Transverse colon (tissue), 4 donors: ENCODE measurements at regions of chr16 and their contacts with region 1.

Region 1: DNA sequence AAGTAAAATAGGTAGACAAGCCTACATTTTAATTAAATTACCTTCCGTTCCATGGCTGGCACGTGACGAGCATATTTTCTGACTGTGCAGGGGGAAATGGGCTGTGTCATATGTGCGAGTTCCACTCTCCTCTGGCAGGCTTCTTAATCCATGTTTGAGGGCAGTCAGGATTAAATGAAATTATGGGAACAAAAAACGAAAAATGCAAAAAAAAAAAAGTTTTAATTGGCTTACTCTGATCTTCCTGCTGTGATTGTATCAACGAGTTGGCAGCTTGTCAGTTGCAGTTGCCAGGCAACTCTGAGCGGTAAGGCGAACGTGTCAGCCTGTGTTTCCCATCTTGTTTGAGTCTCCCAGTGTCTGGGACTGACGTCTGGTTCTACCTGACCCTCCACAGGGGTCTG is 302.9 kb upstream of the XYLT1 start:
- DNase-seq: no peak
- H3K4me3 ChIP-seq: no peak overlapping the region
- H3K27ac ChIP-seq: no peak overlapping the region
- H3K4me1 ChIP-seq: no peaks in the 10 kb centered on the region
- H3K27me3 ChIP-seq: no peaks in the 10 kb centered on the region
- CTCF ChIP-seq: no peak
- EP300 ChIP-seq: no peak
- POLR2A ChIP-seq: no peak

Region 2: DNA sequence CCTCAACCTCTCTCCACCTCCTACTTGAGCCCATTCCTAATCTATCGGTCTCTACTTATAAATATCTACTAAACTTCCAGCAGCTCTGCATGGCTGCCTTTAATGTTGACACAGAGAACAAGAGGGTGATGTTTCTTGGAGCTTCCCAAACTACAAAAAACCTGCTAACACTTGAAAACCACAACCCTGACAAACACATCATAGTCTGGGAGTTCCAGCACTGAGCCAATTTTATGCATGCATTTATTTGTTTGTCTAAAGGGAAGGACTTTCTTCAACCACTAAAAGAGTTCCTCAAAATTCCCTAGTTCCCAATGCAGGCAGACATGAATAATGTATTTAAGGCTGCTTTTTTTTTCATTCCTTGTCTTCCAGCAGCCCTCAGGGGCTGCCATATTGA is 28.9 kb after region 1 on chr16:
- in situ Hi-C with region 1: no loop called
- intact Hi-C with region 1: loop called (anchors 1 kb)
- DNase-seq: no peak
- H3K4me3 ChIP-seq: no peak overlapping the region
- H3K27ac ChIP-seq: no peak overlapping the region
- H3K4me1 ChIP-seq: no peaks in the 10 kb centered on the region
- H3K27me3 ChIP-seq: no peaks in the 10 kb centered on the region
- CTCF ChIP-seq: no peak
- EP300 ChIP-seq: no peak
- POLR2A ChIP-seq: no peak

Region 3: GRCh38 chr16:17850574-17851250 is 77.0 kb after region 1 on chr16:
- in situ Hi-C with region 1: loop called in 1 of 4 experiments (anchors 25 kb)
- intact Hi-C with region 1: no loop called
- DNase-seq: no peak
- H3K4me3 ChIP-seq: no peak overlapping the region
- H3K27ac ChIP-seq: no peak overlapping the region
- H3K4me1 ChIP-seq: no peaks in the 10 kb centered on the region
- H3K27me3 ChIP-seq: no peaks in the 10 kb centered on the region
- CTCF ChIP-seq: no peak
- EP300 ChIP-seq: no peak
- POLR2A ChIP-seq: no peak